Posterior cingulate gyrus (tissue), 11 donors: ENCODE measurements at regions of chr10 and their contacts with region 1.

Region 1: GRCh38 chr10:28663576-28664313 is 13.6 kb upstream of the BAMBI start:
- DNase-seq: peak; percentile 67 to 97 (median 82)

Region 2: DNA sequence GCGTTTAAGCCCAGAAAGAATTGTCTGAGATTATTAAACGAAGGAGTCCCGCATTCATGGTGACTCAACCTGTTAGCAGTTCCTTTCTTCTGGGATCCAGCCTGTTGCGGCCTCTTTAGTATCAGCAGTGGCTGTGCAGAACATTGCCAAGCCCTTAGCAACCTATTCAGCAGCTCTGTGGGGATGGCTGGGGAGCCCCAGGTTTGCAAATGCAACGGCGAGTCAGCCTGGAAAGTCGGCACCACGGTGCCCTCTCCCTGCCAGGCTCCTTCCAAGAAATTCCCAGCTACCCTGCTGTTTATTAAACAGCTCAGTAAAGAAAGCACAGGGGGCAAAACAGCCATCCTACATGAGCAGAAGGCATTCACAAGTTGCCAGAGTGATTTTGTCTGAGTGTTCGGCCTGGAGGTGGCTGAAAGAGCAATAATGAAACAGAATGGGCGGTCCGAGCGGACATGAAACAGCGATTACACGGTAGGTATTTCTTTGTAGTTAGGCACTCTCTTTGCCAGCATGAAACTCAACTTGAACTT is 211.9 kb after region 1 on chr10:
- intact Hi-C with region 1: loop called (anchors 5 kb)
- DNase-seq: peak in 6 of 10 donors; percentile 11 to 86 (median 35)

Region 3: GRCh38 chr10:28991326-28992270 is 327.9 kb after region 1 on chr10:
- intact Hi-C with region 1: loop called (anchors 5 kb)
- DNase-seq: peak in 1 of 10 donors; percentile 12

Region 4: GRCh38 chr10:29131952-29132820 is 468.4 kb after region 1 on chr10:
- intact Hi-C with region 1: loop called (anchors 5 kb)
- DNase-seq: no peak

Region 5: DNA sequence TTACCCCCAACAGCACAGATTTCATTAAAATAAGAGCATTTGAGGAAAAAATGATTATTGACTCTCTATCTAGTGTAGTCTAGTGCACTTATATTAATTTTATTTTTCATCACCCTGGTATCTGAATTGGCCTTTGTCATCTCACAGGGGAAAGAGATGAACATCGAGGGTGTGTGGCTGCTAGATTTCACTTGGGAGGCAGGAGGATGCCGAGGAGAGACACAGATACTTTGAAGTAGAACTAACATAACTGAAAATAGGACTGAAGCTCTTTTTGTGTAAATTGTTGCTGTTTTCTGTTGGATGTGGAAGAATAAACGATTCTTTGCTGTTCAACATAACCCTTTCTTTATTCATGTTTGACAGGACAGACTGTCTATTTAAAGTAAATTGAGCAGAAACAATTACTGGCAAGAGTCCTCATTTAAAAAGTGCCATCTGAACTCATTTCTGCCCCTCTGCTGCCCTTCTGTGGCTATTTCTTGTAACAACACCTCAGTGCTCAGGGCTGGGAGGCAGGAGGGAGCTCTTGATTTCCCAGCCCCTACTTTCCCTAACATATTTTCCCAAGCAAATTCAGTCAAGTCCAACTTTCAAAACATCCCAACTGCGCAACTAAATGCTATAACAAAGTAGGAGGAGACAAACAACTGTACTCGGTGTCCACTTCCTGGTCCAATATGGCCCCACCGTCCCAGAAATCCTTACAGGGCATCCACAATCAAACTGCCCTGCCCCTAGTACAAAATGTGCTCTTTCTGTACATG is 640.7 kb after region 1 on chr10:
- intact Hi-C with region 1: loop called (anchors 2 kb)
- DNase-seq: peak in 9 of 10 donors; percentile 37 to 92 (median 69)

Region 6: DNA sequence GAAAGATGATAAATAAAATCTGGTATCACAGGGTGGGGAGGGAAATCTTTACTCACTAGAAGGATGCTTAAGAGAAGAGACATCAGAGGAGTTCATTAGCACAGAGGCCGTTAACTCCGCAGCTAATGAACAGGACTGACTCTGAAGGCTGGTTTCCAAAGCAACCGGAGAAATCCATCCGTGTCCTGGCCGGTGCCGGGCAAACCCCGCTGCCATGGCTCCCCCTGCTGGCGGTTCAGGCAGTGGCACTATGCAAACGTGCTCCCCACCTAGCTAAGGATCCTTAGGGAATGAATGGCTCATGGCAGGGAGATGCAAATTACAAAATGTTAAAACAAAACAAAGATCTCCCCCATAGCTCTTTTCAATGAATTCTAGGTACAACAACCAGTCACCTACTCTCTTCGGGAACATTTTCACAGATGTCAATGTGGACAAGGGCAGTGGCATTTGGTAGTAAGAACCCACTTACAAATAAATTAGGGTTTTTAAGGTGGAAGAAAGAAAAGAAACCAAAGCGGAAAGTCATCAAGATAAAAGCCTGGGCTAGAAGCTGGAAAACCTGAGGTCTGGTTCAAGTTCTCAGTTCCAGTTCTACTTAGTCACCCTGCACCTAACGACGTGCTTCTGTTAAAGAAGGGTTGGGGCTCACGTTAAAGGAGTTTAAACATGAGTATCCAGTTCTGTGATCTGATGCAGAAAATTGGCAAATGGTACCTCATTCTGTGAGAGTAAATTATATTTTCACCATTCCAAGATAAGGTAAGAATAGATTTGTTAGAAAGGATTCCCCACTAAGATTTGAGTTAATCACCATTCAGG is 832.8 kb after region 1 on chr10:
- intact Hi-C with region 1: loop called (anchors 5 kb)
- DNase-seq: peak; percentile 41 to 95 (median 79)